ENCODE measurements at regions of chr9 and their contacts with region 1.

Region 1: DNA sequence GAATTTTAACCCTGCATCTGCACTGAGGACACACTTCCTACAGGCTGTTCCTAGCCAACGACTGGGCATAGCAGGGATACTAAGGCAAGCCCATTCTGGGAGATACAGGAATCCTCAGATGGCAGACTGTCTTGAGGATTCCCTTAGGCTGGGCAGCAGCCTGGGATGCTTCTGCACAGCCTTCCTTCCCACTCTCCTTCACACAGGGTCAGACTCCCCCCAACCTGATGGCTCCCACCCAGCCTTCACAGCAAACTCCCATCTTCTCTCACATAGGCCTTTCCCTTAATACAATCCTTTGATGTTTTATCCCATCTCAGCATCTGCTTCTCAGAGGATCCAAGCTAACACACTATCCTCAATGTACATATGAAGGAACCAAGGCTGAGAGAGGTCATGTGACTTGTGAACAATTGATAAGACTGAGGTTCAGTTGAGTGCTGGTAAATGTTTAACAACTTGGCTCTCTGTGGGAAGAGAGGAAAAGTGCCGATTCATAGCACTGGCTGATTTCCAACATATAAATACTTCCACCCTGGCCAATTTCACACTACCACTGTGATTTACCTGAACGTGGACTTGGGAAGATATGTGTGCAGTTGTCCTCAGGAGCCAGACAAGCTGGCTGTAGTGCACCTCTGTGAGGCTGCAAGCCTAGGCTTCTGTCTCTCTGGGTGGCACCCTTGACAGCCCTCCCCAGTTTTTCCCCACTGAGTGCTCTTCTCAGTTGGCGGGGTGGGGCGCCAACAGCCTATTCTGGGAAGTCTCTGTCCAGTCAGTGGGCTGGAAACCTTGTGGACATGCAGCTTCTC is 120.2 kb upstream of the TRIM32 start:
- DNase-seq: peak; percentile 35 to 73 (median 69)
- ATAC-seq: peak; percentile 86 to 90 (median 89)
- H3K4me3 ChIP-seq: peak overlapping the region; percentile 3 to 37 (median 34)
- H3K27ac ChIP-seq: peak overlapping the region; percentile 43 to 73 (median 62)
- H3K4me1 ChIP-seq: peaks cover 0 to 45% (median 16%) of the 10 kb centered on the region in 4 donors
- H3K27me3 ChIP-seq: no peaks in the 10 kb centered on the region
- CTCF ChIP-seq: no peak
- POLR2A ChIP-seq: peak; percentile 56

Region 2: GRCh38 chr9:116174111-116174746 is 392.7 kb before region 1 on chr9:
- intact Hi-C with region 1: loop called in 1 of 2 experiments (anchors 10 kb)
- DNase-seq: no peak
- ATAC-seq: peak in 1 of 4 donors; percentile 61
- H3K4me3 ChIP-seq: no peak overlapping the region
- H3K27ac ChIP-seq: no peak overlapping the region
- H3K4me1 ChIP-seq: no peaks in the 10 kb centered on the region
- H3K27me3 ChIP-seq: no peaks in the 10 kb centered on the region
- CTCF ChIP-seq: no peak
- POLR2A ChIP-seq: no peak

Region 3: GRCh38 chr9:116757030-116757429 is 190.1 kb after region 1 on chr9:
- intact Hi-C with region 1: no loop called
- DNase-seq: no peak
- ATAC-seq: no peak
- H3K4me3 ChIP-seq: no peak overlapping the region
- H3K27ac ChIP-seq: no peak overlapping the region
- H3K4me1 ChIP-seq: no peaks in the 10 kb centered on the region
- H3K27me3 ChIP-seq: no peaks in the 10 kb centered on the region
- CTCF ChIP-seq: no peak
- POLR2A ChIP-seq: no peak

Measured in right lobe of liver (tissue), 6 donors.